GM12878 (cell line): ENCODE measurements at regions of chr12 and their contacts with region 1.

Region 1: GRCh38 chr12:50055831-50056638 is 1.4 kb upstream of the ASIC1 start:
- DNase-seq: no peak
- ATAC-seq: peak; percentile 84
- H3K4me3 ChIP-seq: no peak overlapping the region
- H3K27ac ChIP-seq: no peak overlapping the region
- H3K4me1 ChIP-seq: 0 out of 2 replicates have a peak, but pooled peaks cover 4% of the 10 kb centered on the region
- H3K27me3 ChIP-seq: peaks cover 12 to 21% of the 10 kb centered on the region in 2 experiments; a peak in 3 of 4 replicates
- CTCF ChIP-seq: peak; percentile 81 to 98 (median 96)
- EP300 ChIP-seq: no peak
- POLR2A ChIP-seq: no peak
- RAD21 ChIP-seq: peak; percentile 79

Region 2: GRCh38 chr12:49866859-49867579 is 189.0 kb before region 1 on chr12:
- CTCF ChIA-PET with region 1: no interaction called
- POLR2A ChIA-PET with region 1: no interaction called
- RAD21 ChIA-PET with region 1: no interaction called
- SMC1A ChIA-PET with region 1: interaction called, 4 read pairs
- in situ Hi-C with region 1: no loop called
- intact Hi-C with region 1: loop called (anchors 10 kb)
- DNase-seq: no peak
- ATAC-seq: peak; percentile 96
- H3K4me3 ChIP-seq: no peak overlapping the region
- H3K27ac ChIP-seq: no peak overlapping the region
- H3K4me1 ChIP-seq: no peaks in the 10 kb centered on the region
- H3K27me3 ChIP-seq: no peaks in the 10 kb centered on the region; a peak in 2 of 4 replicates
- CTCF ChIP-seq: peak; percentile 94 to 99 (median 99); a peak in 5 of 6 replicates
- EP300 ChIP-seq: no peak
- POLR2A ChIP-seq: no peak
- RAD21 ChIP-seq: peak; percentile 74

Region 3: GRCh38 chr12:49945394-49946080 is 110.5 kb before region 1 on chr12:
- CTCF ChIA-PET with region 1: interaction called, 11 read pairs
- POLR2A ChIA-PET with region 1: no interaction called
- RAD21 ChIA-PET with region 1: interaction called, 4 read pairs
- SMC1A ChIA-PET with region 1: no interaction called
- in situ Hi-C with region 1: no loop called
- intact Hi-C with region 1: no loop called
- DNase-seq: peak; percentile 45
- ATAC-seq: peak; percentile 100
- H3K4me3 ChIP-seq: no peak overlapping the region
- H3K27ac ChIP-seq: no peak overlapping the region
- H3K4me1 ChIP-seq: no peaks in the 10 kb centered on the region
- H3K27me3 ChIP-seq: no peaks in the 10 kb centered on the region; a peak in 1 of 4 replicates
- CTCF ChIP-seq: peak; percentile 85 to 93 (median 92)
- EP300 ChIP-seq: no peak
- POLR2A ChIP-seq: no peak
- RAD21 ChIP-seq: no peak

Region 4: GRCh38 chr12:50038336-50038735 is 17.7 kb before region 1 on chr12:
- CTCF ChIA-PET with region 1: interaction called, 39 read pairs
- POLR2A ChIA-PET with region 1: no interaction called
- RAD21 ChIA-PET with region 1: interaction called, 10 read pairs
- SMC1A ChIA-PET with region 1: interaction called, 14 read pairs
- in situ Hi-C with region 1: no loop called
- intact Hi-C with region 1: loop called (anchors 2 kb)
- DNase-seq: no peak
- ATAC-seq: no peak
- H3K4me3 ChIP-seq: no peak overlapping the region
- H3K27ac ChIP-seq: no peak overlapping the region
- H3K4me1 ChIP-seq: no peaks in the 10 kb centered on the region
- H3K27me3 ChIP-seq: no peaks in the 10 kb centered on the region
- CTCF ChIP-seq: no peak
- EP300 ChIP-seq: no peak
- POLR2A ChIP-seq: no peak
- RAD21 ChIP-seq: no peak

Region 5: DNA sequence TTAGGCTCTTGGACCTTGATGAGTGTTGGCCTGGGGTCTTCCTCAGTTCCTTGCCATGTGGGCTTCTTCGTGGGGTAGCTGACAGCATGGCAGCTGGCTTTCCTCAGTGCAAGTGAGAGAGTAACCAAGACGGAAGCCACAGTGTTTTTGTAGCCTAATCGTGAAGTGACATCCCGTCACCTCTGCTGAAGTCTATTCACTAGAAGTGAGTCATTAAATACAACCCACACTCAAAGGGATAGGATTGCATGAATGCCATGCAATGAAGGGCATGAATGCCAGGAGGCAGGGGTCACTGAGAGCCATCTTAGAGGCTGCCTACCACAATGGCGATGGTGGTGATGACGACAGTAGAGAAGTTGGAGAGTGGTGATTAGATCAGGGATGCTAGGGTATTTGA is 12.2 kb before region 1 on chr12:
- CTCF ChIA-PET with region 1: interaction called, 39 read pairs
- POLR2A ChIA-PET with region 1: no interaction called
- RAD21 ChIA-PET with region 1: interaction called, 10 read pairs
- SMC1A ChIA-PET with region 1: interaction called, 14 read pairs
- in situ Hi-C with region 1: no loop called
- intact Hi-C with region 1: loop called (anchors 2 kb)
- DNase-seq: no peak
- ATAC-seq: no peak
- H3K4me3 ChIP-seq: no peak overlapping the region
- H3K27ac ChIP-seq: no peak overlapping the region
- H3K4me1 ChIP-seq: no peaks in the 10 kb centered on the region
- H3K27me3 ChIP-seq: no peaks in the 10 kb centered on the region
- CTCF ChIP-seq: no peak
- EP300 ChIP-seq: no peak
- POLR2A ChIP-seq: no peak
- RAD21 ChIP-seq: no peak

Region 6: GRCh38 chr12:50066433-50066832 is 10.4 kb after region 1 on chr12:
- CTCF ChIA-PET with region 1: interaction called, 40 read pairs
- POLR2A ChIA-PET with region 1: no interaction called
- RAD21 ChIA-PET with region 1: interaction called, 6 read pairs
- SMC1A ChIA-PET with region 1: interaction called, 4 read pairs
- in situ Hi-C with region 1: no loop called
- intact Hi-C with region 1: no loop called
- DNase-seq: no peak
- ATAC-seq: peak; percentile 65
- H3K4me3 ChIP-seq: no peak overlapping the region
- H3K27ac ChIP-seq: no peak overlapping the region
- H3K4me1 ChIP-seq: no peaks in the 10 kb centered on the region
- H3K27me3 ChIP-seq: no peaks in the 10 kb centered on the region; a peak in 2 of 4 replicates
- CTCF ChIP-seq: no peak
- EP300 ChIP-seq: no peak
- POLR2A ChIP-seq: no peak
- RAD21 ChIP-seq: no peak